Activated B cell treated with CpG ODN at 0.5 μM for 24 hours (primary cell): ENCODE measurements at regions of chr1 and their contacts with region 1.

Region 1: GRCh38 chr1:177948336-177948972 is 21.4 kb downstream of the SEC16B start:
- DNase-seq: no peak
- ATAC-seq: no peak
- H3K4me3 Mint-ChIP-seq: no peak overlapping the region
- H3K27ac Mint-ChIP-seq: no peak overlapping the region
- H3K4me1 Mint-ChIP-seq: no peaks in the 10 kb centered on the region
- H3K27me3 Mint-ChIP-seq: peaks cover 12% of the 10 kb centered on the region
- CTCF ChIP-seq: no peak

Region 2: DNA sequence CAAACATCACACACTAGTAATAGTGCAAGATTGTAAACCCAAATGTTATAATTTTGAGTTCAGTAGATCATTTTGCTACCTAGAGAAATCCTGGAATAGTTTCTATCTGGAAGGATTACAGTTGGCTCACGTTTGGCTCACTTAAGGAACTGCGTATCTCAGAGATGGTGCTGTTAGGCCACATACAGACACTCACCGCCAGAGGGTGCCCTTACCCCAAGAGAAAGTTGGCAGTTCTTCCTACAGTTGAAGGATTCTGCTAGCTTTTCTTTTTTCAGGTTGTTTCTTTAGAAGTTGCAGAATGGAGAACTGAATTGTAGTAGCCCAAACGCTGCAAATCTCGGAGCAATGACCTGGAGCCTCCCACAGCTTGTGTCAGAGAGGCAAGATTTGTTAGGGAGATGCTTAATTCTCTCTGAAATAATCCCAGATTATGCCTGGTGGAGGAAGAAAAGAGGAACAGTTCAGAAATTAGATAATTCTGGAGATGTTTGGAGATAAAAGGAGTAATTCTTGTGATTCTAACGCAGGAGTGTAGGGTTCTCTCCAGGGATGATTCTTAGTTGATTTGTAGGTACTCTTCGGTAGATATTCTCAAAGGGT is 1573.4 kb before region 1 on chr1:
- CTCF ChIA-PET with region 1: no interaction called
- POLR2A ChIA-PET with region 1: no interaction called
- intact Hi-C with region 1: loop called (anchors 5 kb)
- DNase-seq: peak; percentile 22
- ATAC-seq: peak; percentile 49
- H3K4me3 Mint-ChIP-seq: no peak overlapping the region
- H3K27ac Mint-ChIP-seq: no peak overlapping the region
- H3K4me1 Mint-ChIP-seq: no peaks in the 10 kb centered on the region
- H3K27me3 Mint-ChIP-seq: peaks cover 6% of the 10 kb centered on the region
- CTCF ChIP-seq: no peak

Region 3: GRCh38 chr1:176559878-176560277 is 1388.6 kb before region 1 on chr1:
- CTCF ChIA-PET with region 1: no interaction called
- POLR2A ChIA-PET with region 1: no interaction called
- intact Hi-C with region 1: loop called (anchors 5 kb)
- DNase-seq: no peak
- ATAC-seq: no peak
- H3K4me3 Mint-ChIP-seq: no peak overlapping the region
- H3K27ac Mint-ChIP-seq: no peak overlapping the region
- H3K4me1 Mint-ChIP-seq: no peaks in the 10 kb centered on the region
- H3K27me3 Mint-ChIP-seq: peaks cover 2% of the 10 kb centered on the region
- CTCF ChIP-seq: no peak

Region 4: GRCh38 chr1:178101654-178102053 is 153.2 kb after region 1 on chr1:
- CTCF ChIA-PET with region 1: no interaction called
- POLR2A ChIA-PET with region 1: no interaction called
- intact Hi-C with region 1: no loop called
- DNase-seq: no peak
- ATAC-seq: no peak
- H3K4me3 Mint-ChIP-seq: no peak overlapping the region
- H3K27ac Mint-ChIP-seq: no peak overlapping the region
- H3K4me1 Mint-ChIP-seq: no peaks in the 10 kb centered on the region
- H3K27me3 Mint-ChIP-seq: peaks cover 24% of the 10 kb centered on the region
- CTCF ChIP-seq: no peak

Region 5: GRCh38 chr1:178189814-178190213 is 241.4 kb after region 1 on chr1:
- CTCF ChIA-PET with region 1: no interaction called
- POLR2A ChIA-PET with region 1: no interaction called
- intact Hi-C with region 1: loop called (anchors 10 kb)
- DNase-seq: no peak
- ATAC-seq: no peak
- H3K4me3 Mint-ChIP-seq: no peak overlapping the region
- H3K27ac Mint-ChIP-seq: no peak overlapping the region
- H3K4me1 Mint-ChIP-seq: peaks cover 3% of the 10 kb centered on the region
- H3K27me3 Mint-ChIP-seq: peaks cover 19% of the 10 kb centered on the region
- CTCF ChIP-seq: no peak